ENCODE measurements at regions of chr2 and their contacts with region 1.

Region 1: GRCh38 chr2:171703574-171704347 is 16.5 kb downstream of the DYNC1I2 start:
- DNase-seq: no peak
- ATAC-seq: peak; percentile 20 to 75 (median 52)
- H3K4me3 ChIP-seq: no peak overlapping the region
- H3K27ac ChIP-seq: peak overlapping the region in 10 of 12 donors; percentile 9 to 69 (median 43)
- H3K4me1 ChIP-seq: peaks cover 0 to 41% (median 16%) of the 10 kb centered on the region in 12 donors
- H3K27me3 ChIP-seq: no peaks in the 10 kb centered on the region
- CTCF ChIP-seq: peak; percentile 17 to 58 (median 38)
- POLR2A ChIP-seq: no peak

Region 2: GRCh38 chr2:171574149-171574795 is 129.5 kb before region 1 on chr2:
- intact Hi-C with region 1: loop called in 1 of 10 experiments (anchors 10 kb)
- DNase-seq: peak; percentile 73 to 91 (median 80)
- ATAC-seq: peak; percentile 66 to 97 (median 96)
- H3K4me3 ChIP-seq: peak overlapping the region in 2 of 12 donors; percentile 1 to 5
- H3K27ac ChIP-seq: no peak overlapping the region
- H3K4me1 ChIP-seq: no peaks in the 10 kb centered on the region
- H3K27me3 ChIP-seq: peaks cover 0 to 5% (median 0%) of the 10 kb centered on the region in 9 donors
- CTCF ChIP-seq: peak; percentile 95 to 99 (median 98)
- POLR2A ChIP-seq: no peak

Measured in heart left ventricle (tissue), 16 donors.